ENCODE measurements at regions of chr2 and their contacts with region 1.

Region 1: GRCh38 chr2:198004921-198005829 is 200.8 kb downstream of the PLCL1 start:
- DNase-seq: peak; percentile 74
- H3K4me3 Mint-ChIP-seq: peak overlapping the region; percentile 60
- H3K27ac Mint-ChIP-seq: peak overlapping the region; percentile 89
- H3K4me1 Mint-ChIP-seq: peaks cover 66% of the 10 kb centered on the region
- H3K27me3 Mint-ChIP-seq: no peaks in the 10 kb centered on the region

Region 2: GRCh38 chr2:197209742-197210408 is 795.3 kb before region 1 on chr2:
- CTCF ChIA-PET with region 1: no interaction called
- intact Hi-C with region 1: loop called (anchors 10 kb)
- DNase-seq: peak; percentile 78
- H3K4me3 Mint-ChIP-seq: peak overlapping the region; percentile 46
- H3K27ac Mint-ChIP-seq: peak overlapping the region; percentile 97
- H3K4me1 Mint-ChIP-seq: peaks cover 99% of the 10 kb centered on the region
- H3K27me3 Mint-ChIP-seq: no peaks in the 10 kb centered on the region

Region 3: GRCh38 chr2:197838036-197838435 is 167.1 kb before region 1 on chr2:
- CTCF ChIA-PET with region 1: interaction called, 3 read pairs
- intact Hi-C with region 1: loop called (anchors 1 kb)
- DNase-seq: peak; percentile 48
- H3K4me3 Mint-ChIP-seq: peak overlapping the region; percentile 56
- H3K27ac Mint-ChIP-seq: peak overlapping the region; percentile 63
- H3K4me1 Mint-ChIP-seq: peaks cover 59% of the 10 kb centered on the region
- H3K27me3 Mint-ChIP-seq: no peaks in the 10 kb centered on the region

Region 4: DNA sequence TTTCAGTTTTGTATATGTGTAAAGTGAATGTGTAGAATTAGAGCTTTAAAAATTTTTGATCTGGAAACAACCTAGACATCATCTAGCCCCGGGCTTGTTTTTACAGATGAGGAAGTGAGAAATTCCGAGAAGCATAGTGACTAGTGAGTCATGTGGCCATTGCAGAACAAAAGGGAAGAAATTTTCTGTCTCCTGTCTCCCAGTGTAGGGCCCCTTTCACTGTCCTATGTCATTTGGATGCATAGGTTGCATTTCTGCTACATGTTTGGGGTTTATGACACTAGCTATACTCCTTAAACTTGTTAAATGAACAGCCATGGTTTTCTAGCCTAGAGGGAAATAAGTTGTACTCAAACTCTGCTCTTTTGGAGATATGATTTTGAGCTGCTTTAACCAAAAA is 116.1 kb before region 1 on chr2:
- CTCF ChIA-PET with region 1: no interaction called
- intact Hi-C with region 1: loop called (anchors 1 kb)
- DNase-seq: peak; percentile 76
- H3K4me3 Mint-ChIP-seq: peak overlapping the region; percentile 21
- H3K27ac Mint-ChIP-seq: peak overlapping the region; percentile 94
- H3K4me1 Mint-ChIP-seq: peaks cover 74% of the 10 kb centered on the region
- H3K27me3 Mint-ChIP-seq: no peaks in the 10 kb centered on the region

Region 5: GRCh38 chr2:197972061-197972460 is 33.1 kb before region 1 on chr2:
- CTCF ChIA-PET with region 1: interaction called, 5 read pairs
- intact Hi-C with region 1: loop called (anchors 2 kb)
- DNase-seq: no peak
- H3K4me3 Mint-ChIP-seq: no peak overlapping the region
- H3K27ac Mint-ChIP-seq: no peak overlapping the region
- H3K4me1 Mint-ChIP-seq: peaks cover 43% of the 10 kb centered on the region
- H3K27me3 Mint-ChIP-seq: no peaks in the 10 kb centered on the region

Region 6: GRCh38 chr2:198127627-198128026 is 122.5 kb after region 1 on chr2:
- CTCF ChIA-PET with region 1: no interaction called
- intact Hi-C with region 1: loop called (anchors 5 kb)
- DNase-seq: peak; percentile 68
- H3K4me3 Mint-ChIP-seq: no peak overlapping the region
- H3K27ac Mint-ChIP-seq: no peak overlapping the region
- H3K4me1 Mint-ChIP-seq: no peaks in the 10 kb centered on the region
- H3K27me3 Mint-ChIP-seq: no peaks in the 10 kb centered on the region

Measured in activated naive CD4-positive, alpha-beta T cell treated with anti-CD3 and anti-CD28 coated beads for 36 hours (primary cell).